ENCODE measurements at regions of chr19 and their contacts with region 1.

Region 1: DNA sequence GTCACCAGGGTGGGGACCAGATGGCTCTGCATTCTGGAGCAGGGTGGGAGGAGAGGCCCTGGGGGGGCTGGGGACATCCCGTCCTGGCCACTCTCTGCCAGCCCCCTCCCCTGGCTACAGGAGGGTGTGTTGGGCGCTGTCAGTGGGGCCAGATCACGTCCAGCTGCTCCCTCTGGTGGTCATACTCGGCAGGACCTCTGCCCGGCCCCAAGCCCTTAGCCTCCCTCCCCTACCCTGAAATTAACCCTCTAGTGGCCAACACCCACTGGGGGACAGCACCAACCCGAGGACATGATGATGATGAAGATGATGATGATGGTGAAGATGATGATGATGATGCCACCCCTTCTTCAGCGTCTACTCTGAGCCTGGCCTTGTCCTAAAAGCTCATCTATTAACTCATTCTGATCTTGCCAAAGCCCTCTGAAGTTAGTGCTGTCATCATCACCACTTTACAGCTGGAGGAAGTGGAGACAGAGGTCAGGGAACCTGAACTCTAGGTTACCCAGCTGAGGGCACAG is 590 bp upstream of the LGI4 start:
- DNase-seq: peak; percentile 90
- H3K4me3 Mint-ChIP-seq: no peak overlapping the region
- H3K27ac Mint-ChIP-seq: no peak overlapping the region
- H3K4me1 Mint-ChIP-seq: peaks cover 7% of the 10 kb centered on the region
- H3K27me3 Mint-ChIP-seq: peaks cover 8% of the 10 kb centered on the region

Region 2: GRCh38 chr19:35074426-35075201 is 60.8 kb before region 1 on chr19:
- intact Hi-C with region 1: no loop called
- DNase-seq: no peak
- H3K4me3 Mint-ChIP-seq: no peak overlapping the region
- H3K27ac Mint-ChIP-seq: no peak overlapping the region
- H3K4me1 Mint-ChIP-seq: peaks cover 1% of the 10 kb centered on the region
- H3K27me3 Mint-ChIP-seq: no peaks in the 10 kb centered on the region

Region 3: GRCh38 chr19:35114353-35115176 is 20.9 kb before region 1 on chr19:
- intact Hi-C with region 1: loop called (anchors 1 kb)
- DNase-seq: peak; percentile 90
- H3K4me3 Mint-ChIP-seq: no peak overlapping the region
- H3K27ac Mint-ChIP-seq: no peak overlapping the region
- H3K4me1 Mint-ChIP-seq: peaks cover 5% of the 10 kb centered on the region
- H3K27me3 Mint-ChIP-seq: peaks cover 5% of the 10 kb centered on the region

Measured in activated CD4-positive, alpha-beta T cell treated with anti-CD3 and anti-CD28 coated beads, Interleukin-2, amount 10 ng/mL, durations not matched to agents 24 days and 14 days (primary cell).